Endothelial cell of umbilical vein (primary cell): ENCODE measurements at regions of chr17 and their contacts with region 1.

Region 1: GRCh38 chr17:28598799-28599310 is at the start of gene SPAG5:
- DNase-seq: peak; percentile 97
- H3K4me3 ChIP-seq: peak within 1 kb of the TSS; percentile 61 to 90 (median 68)
- H3K27ac ChIP-seq: peak within 1 kb of the TSS; percentile 95
- H3K4me1 ChIP-seq: peaks cover 18% of the 10 kb centered on the region
- H3K27me3 ChIP-seq: no peaks in the 10 kb centered on the region
- CTCF ChIP-seq: no peak
- POLR2A ChIP-seq: peak; percentile 77
- total RNA-seq, gene SPAG5: 85.4 and 90.6 TPM in 2 replicates

Region 2: DNA sequence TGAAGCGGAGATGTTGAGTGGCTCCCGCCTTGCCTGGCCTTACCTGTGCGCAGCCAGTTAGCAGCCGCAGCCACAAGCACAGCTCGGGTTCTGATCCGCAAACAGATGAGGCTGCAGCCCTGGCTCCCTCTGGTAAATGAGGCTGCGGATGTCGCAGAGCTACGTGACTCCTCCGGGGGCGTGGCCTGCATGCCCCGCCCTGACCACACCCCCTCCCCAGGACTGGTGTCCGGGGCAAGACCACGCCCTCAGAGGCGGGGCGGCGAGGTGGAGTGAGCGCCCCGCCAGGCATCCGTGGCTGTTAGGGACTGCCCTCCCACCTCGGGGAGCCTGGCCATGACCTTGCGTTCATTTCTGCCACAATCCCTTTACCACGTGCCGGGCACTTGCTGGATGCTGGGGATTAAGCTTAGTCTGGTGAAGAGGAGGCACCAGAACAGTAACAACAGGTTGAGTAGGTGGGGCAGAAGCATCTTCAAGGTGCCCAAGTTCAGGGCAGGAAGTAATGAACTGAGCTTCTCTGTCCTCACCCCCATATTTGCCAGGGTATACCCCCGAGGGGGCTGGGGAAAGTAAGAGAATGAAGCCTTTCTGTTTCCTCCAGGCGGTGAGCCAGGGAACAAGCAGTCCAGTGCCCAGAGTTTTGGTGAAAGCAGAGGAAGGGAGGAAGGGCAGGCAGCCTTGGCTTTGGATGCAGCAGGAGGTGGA is 21.9 kb before region 1 on chr17 and contains the start of gene ALDOC:
- CTCF ChIA-PET with region 1: interaction called, 4 read pairs
- POLR2A ChIA-PET with region 1: no interaction called
- dilution Hi-C with region 1: no loop called
- intact Hi-C with region 1: loop called (anchors 2 kb)
- DNase-seq: peak; percentile 89
- H3K4me3 ChIP-seq: peak within 1 kb of the TSS in 1 of 3 experiments; percentile 14
- H3K27ac ChIP-seq: no peak within 1 kb of the TSS
- H3K4me1 ChIP-seq: peaks cover 4% of the 10 kb centered on the region
- H3K27me3 ChIP-seq: no peaks in the 10 kb centered on the region
- CTCF ChIP-seq: no peak
- POLR2A ChIP-seq: peak; percentile 41
- total RNA-seq, gene ALDOC: 7.2 and 9.0 TPM in 2 replicates

Region 3: DNA sequence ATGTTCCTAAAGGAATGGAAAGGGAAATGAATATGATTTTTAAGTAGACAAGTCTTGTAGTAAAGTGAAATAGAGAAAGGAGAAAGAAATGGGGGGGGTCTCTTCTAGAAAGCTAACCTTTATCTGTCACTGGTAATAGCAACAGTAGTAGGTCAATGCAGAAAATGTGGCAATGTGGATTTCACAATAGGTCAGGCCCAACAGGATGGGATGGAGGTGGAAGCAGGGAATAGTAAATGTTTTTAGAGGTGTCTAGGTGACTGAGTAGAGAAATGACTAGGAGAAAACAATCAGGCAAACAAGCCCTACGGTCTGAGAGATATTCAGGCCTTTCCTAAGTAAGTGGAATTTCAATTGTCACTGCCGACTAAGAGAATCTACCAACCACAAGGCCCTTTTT is 21.2 kb after region 1 on chr17:
- CTCF ChIA-PET with region 1: no interaction called
- POLR2A ChIA-PET with region 1: no interaction called
- dilution Hi-C with region 1: no loop called
- intact Hi-C with region 1: no loop called
- DNase-seq: no peak
- H3K4me3 ChIP-seq: no peak overlapping the region
- H3K27ac ChIP-seq: no peak overlapping the region
- H3K4me1 ChIP-seq: no peaks in the 10 kb centered on the region
- H3K27me3 ChIP-seq: no peaks in the 10 kb centered on the region
- CTCF ChIP-seq: no peak
- POLR2A ChIP-seq: no peak